K562 (cell line): ENCODE measurements at regions of chr11 and their contacts with region 1.

Region 1: GRCh38 chr11:17839973-17840611 is 105.5 kb downstream of the KCNC1 start:
- DNase-seq: no peak
- ATAC-seq: no peak
- H3K4me3 ChIP-seq: no peak overlapping the region
- H3K27ac ChIP-seq: no peak overlapping the region
- H3K4me1 ChIP-seq: no peaks in the 10 kb centered on the region
- H3K27me3 ChIP-seq: no peaks in the 10 kb centered on the region
- CTCF ChIP-seq: no peak
- EP300 ChIP-seq: no peak
- POLR2A ChIP-seq: no peak
- RAD21 ChIP-seq: no peak

Region 2: DNA sequence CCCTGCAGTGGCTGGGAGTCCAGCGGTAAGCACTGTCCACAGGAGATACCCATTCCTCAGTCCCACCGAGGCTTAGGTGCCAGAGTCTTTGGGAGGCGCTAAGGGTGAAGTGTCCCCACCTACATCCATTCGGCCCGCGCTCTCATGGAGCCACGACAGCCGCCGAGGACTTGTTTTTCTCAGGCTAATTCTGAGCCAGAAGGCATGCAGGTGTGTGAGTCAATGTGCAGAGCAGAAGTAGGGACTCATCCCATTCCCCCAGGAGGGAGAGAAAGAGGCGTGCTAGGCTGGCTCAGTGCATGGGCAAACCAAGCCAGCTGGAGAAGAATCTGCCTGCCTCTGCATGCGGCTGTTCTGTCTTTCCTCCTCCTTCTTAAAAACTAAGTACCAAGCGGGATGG is 58.9 kb before region 1 on chr11:
- CTCF ChIA-PET with region 1: no interaction called
- POLR2A ChIA-PET with region 1: no interaction called
- in situ Hi-C with region 1: no loop called
- intact Hi-C with region 1: no loop called
- DNase-seq: no peak
- ATAC-seq: peak; percentile 25; the same call in 2 of the 3 replicates
- H3K4me3 ChIP-seq: no peak overlapping the region
- H3K27ac ChIP-seq: no peak overlapping the region
- H3K4me1 ChIP-seq: 0 out of 5 replicates have a peak, but pooled peaks cover 0 to 3% of the 10 kb centered on the region in 2 experiments
- H3K27me3 ChIP-seq: peaks cover 22 to 65% of the 10 kb centered on the region in 2 experiments; a peak in 4 of 5 replicates
- CTCF ChIP-seq: no peak
- EP300 ChIP-seq: no peak
- POLR2A ChIP-seq: no peak
- RAD21 ChIP-seq: no peak

Region 3: DNA sequence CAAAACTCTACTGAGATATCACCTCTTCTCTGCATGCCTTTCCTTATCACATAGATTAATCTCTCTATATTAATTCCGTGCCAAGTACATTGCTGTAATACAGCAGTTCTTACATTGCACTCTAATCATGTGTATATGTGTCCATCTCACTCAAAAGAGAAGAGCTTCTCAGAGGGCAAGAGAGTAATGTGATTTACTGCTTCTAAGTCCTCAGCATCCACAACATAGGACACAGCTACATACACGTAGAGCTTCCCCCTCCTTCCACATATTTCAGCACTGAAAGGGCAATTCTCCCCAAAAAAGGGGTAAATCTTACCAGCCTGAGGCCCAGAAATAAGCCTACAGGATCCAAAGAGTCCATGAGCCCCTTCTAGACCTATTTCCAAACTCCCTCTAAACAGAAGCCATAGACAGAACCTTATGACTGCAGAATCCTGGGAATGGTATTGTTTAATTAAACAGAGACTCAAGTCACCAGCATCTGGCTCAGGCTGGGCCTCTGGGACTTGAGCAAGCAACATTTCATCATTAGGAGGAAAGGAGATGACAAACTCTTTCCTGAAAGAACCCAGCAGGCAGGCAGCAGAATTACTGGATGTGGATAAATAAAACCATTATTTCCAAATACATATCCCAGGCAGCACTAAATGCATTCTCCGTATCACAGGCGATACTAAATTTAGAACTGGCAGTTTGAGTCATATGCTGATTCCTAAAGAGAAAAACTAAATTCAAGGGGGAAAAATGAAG is 18.3 kb before region 1 on chr11:
- CTCF ChIA-PET with region 1: no interaction called
- POLR2A ChIA-PET with region 1: no interaction called
- in situ Hi-C with region 1: no loop called
- intact Hi-C with region 1: no loop called
- DNase-seq: no peak
- ATAC-seq: no peak
- H3K4me3 ChIP-seq: no peak overlapping the region
- H3K27ac ChIP-seq: no peak overlapping the region
- H3K4me1 ChIP-seq: no peaks in the 10 kb centered on the region
- H3K27me3 ChIP-seq: no peaks in the 10 kb centered on the region
- CTCF ChIP-seq: no peak
- EP300 ChIP-seq: no peak
- POLR2A ChIP-seq: no peak
- RAD21 ChIP-seq: no peak

Region 4: GRCh38 chr11:17850336-17850735 is 10.2 kb after region 1 on chr11:
- CTCF ChIA-PET with region 1: no interaction called
- POLR2A ChIA-PET with region 1: interaction called, 10 read pairs
- in situ Hi-C with region 1: no loop called
- intact Hi-C with region 1: no loop called
- DNase-seq: no peak
- ATAC-seq: no peak
- H3K4me3 ChIP-seq: no peak overlapping the region
- H3K27ac ChIP-seq: no peak overlapping the region
- H3K4me1 ChIP-seq: peaks cover 0 to 4% of the 10 kb centered on the region in 2 experiments; a peak in 2 of 5 replicates
- H3K27me3 ChIP-seq: no peaks in the 10 kb centered on the region
- CTCF ChIP-seq: no peak
- EP300 ChIP-seq: no peak
- POLR2A ChIP-seq: no peak
- RAD21 ChIP-seq: no peak

Region 5: GRCh38 chr11:17905477-17905876 is 65.4 kb after region 1 on chr11:
- CTCF ChIA-PET with region 1: no interaction called
- POLR2A ChIA-PET with region 1: no interaction called
- in situ Hi-C with region 1: no loop called
- intact Hi-C with region 1: no loop called
- DNase-seq: no peak
- ATAC-seq: no peak
- H3K4me3 ChIP-seq: no peak overlapping the region
- H3K27ac ChIP-seq: no peak overlapping the region
- H3K4me1 ChIP-seq: no peaks in the 10 kb centered on the region
- H3K27me3 ChIP-seq: no peaks in the 10 kb centered on the region
- CTCF ChIP-seq: no peak
- EP300 ChIP-seq: no peak
- POLR2A ChIP-seq: no peak
- RAD21 ChIP-seq: no peak